Activated CD8-positive, alpha-beta T cell treated with anti-CD3 and anti-CD28 coated beads, Interleukin-2, amount 10 ng/mL, durations not matched to agents 7 days and 5 days (primary cell): ENCODE measurements at regions of chr16 and their contacts with region 1.

Region 1: GRCh38 chr16:30934827-30935557 is 11.6 kb downstream of the FBXL19 start:
- DNase-seq: peak; percentile 63
- ATAC-seq: peak; percentile 52
- H3K4me3 Mint-ChIP-seq: no peak overlapping the region
- H3K27ac Mint-ChIP-seq: peak overlapping the region; percentile 15
- H3K4me1 Mint-ChIP-seq: peaks cover 37% of the 10 kb centered on the region
- H3K27me3 Mint-ChIP-seq: no peaks in the 10 kb centered on the region

Region 2: DNA sequence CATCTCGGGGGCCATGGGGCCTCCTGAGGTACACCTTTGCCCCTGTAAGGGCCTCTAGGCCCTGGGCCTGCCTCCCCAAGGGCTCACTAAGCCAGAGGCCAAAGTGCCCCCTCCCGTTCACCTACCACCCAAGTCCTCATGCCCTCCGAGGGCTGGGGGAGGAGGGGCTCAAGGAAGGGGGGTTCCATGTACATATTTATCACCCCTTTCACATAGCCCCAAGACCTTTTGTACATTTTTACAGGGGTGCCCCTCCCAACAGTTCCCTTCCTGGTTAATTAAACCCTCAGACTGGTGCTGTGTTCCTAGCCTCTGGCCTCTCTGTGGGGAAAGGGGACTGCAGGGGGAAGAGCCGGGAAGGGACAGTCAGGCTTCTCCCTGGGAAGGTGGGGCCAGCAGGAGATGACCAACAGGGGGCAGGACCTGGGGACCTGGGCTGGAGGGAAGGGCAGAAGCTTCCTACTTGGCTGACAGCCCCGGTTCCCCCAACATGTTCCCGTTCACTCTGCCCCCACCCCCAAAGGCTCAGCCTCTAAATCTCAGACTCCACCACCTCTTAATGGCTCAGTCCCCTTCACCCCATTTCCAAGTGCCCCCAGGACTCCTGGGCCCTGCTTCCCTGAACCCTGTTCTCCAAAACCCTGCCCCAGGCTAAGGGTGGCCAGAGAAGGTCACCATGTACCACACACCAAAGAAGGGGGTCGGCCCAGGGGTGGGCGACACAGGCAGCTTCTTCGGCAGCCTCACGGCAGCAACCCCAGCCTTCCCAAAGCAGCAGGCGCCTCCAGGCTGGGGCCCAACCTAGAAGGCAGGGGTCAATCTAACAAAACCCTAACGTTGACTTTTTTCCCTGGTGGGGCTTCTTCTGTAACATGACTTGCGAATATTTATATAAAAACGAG is 264.8 kb before region 1 on chr16:
- CTCF ChIA-PET with region 1: no interaction called
- POLR2A ChIA-PET with region 1: no interaction called
- DNase-seq: no peak
- ATAC-seq: no peak
- H3K4me3 Mint-ChIP-seq: no peak overlapping the region
- H3K27ac Mint-ChIP-seq: no peak overlapping the region
- H3K4me1 Mint-ChIP-seq: no peaks in the 10 kb centered on the region
- H3K27me3 Mint-ChIP-seq: no peaks in the 10 kb centered on the region

Region 3: DNA sequence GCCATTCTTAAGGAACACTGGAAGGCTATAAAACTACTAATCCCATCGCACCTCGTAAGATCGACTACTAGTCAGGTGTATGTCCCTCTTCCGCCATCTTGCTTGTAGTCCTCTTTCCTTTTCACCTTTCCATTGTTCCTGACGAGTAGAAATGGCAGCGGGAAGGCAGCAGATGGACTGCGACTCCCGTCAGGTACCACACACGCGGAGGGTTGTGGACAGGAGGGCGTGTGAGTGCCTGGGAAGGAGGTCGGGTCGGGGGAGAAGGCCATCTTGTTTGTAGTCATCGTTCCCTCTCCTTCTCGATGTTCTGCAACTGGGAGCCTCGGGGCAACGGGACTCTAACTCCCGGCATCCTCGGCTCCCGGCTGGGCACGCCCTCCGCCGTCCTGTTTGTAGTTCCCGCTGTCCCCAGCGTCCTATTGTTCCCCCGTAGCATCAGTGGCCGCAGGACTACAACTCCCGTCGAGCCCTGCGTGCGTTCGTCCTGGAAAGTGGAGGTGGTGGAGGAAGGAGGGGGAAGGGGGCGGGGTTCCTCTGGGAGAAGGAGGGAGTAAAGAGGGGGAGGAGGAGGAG is 11.9 kb before region 1 on chr16:
- CTCF ChIA-PET with region 1: interaction called, 18 read pairs
- POLR2A ChIA-PET with region 1: no interaction called
- DNase-seq: peak; percentile 98
- ATAC-seq: peak; percentile 82
- H3K4me3 Mint-ChIP-seq: peak overlapping the region; percentile 97
- H3K27ac Mint-ChIP-seq: peak overlapping the region; percentile 99
- H3K4me1 Mint-ChIP-seq: peaks cover 28% of the 10 kb centered on the region
- H3K27me3 Mint-ChIP-seq: no peaks in the 10 kb centered on the region

Region 4: GRCh38 chr16:30948667-30949649 is 14.0 kb after region 1 on chr16 and contains the start of gene ORAI3:
- CTCF ChIA-PET with region 1: interaction called, 95 read pairs
- POLR2A ChIA-PET with region 1: interaction called, 5 read pairs
- DNase-seq: peak; percentile 61
- ATAC-seq: peak; percentile 66
- H3K4me3 Mint-ChIP-seq: peak within 1 kb of the TSS; percentile 96
- H3K27ac Mint-ChIP-seq: peak within 1 kb of the TSS; percentile 82
- H3K4me1 Mint-ChIP-seq: peaks cover 31% of the 10 kb centered on the region
- H3K27me3 Mint-ChIP-seq: no peaks in the 10 kb centered on the region
- total RNA-seq, gene ORAI3: 21.4 to 23.1 TPM